Dendritic cell treated with granulocyte-macrophage colony-stimulating factor and Interleukin-4, amounts not matched to agents 40 ng/mL and 50 ng/mL, for 4 days (primary cell): ENCODE measurements at regions of chr4 and their contacts with region 1.

Region 1: GRCh38 chr4:162497564-162498167 is 333.9 kb upstream of the FSTL5 start:
- H3K4me3 Mint-ChIP-seq: no peak overlapping the region
- H3K27ac Mint-ChIP-seq: no peak overlapping the region
- H3K4me1 Mint-ChIP-seq: no peaks in the 10 kb centered on the region
- H3K27me3 Mint-ChIP-seq: peaks cover 1% of the 10 kb centered on the region

Region 2: DNA sequence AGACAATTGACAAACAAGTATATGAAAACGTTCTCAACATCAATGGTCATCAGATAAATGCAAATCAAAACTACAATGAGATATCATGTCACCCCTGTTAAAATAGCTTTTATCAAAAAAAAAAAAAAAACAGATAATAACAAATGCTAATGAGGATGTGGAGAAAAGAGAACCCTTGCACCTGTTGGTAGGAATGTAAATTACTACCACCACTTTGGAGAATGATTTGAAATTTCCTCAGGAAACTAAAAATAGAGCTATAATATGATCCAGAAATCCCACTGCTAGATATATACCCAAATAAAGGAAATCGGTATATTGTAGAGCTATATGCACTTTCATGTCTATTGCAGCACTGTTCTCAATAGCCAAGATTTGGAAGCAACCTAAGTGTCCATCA is 136.7 kb after region 1 on chr4:
- intact Hi-C with region 1: no loop called
- H3K4me3 Mint-ChIP-seq: no peak overlapping the region
- H3K27ac Mint-ChIP-seq: no peak overlapping the region
- H3K4me1 Mint-ChIP-seq: no peaks in the 10 kb centered on the region
- H3K27me3 Mint-ChIP-seq: no peaks in the 10 kb centered on the region

Region 3: GRCh38 chr4:162782778-162783564 is 285.3 kb after region 1 on chr4:
- intact Hi-C with region 1: no loop called
- H3K4me3 Mint-ChIP-seq: no peak overlapping the region
- H3K27ac Mint-ChIP-seq: no peak overlapping the region
- H3K4me1 Mint-ChIP-seq: no peaks in the 10 kb centered on the region
- H3K27me3 Mint-ChIP-seq: no peaks in the 10 kb centered on the region

Region 4: GRCh38 chr4:162847945-162848549 is 350.4 kb after region 1 on chr4:
- intact Hi-C with region 1: no loop called
- H3K4me3 Mint-ChIP-seq: no peak overlapping the region
- H3K27ac Mint-ChIP-seq: no peak overlapping the region
- H3K4me1 Mint-ChIP-seq: no peaks in the 10 kb centered on the region
- H3K27me3 Mint-ChIP-seq: no peaks in the 10 kb centered on the region

Region 5: GRCh38 chr4:163217505-163217904 is 719.8 kb after region 1 on chr4:
- intact Hi-C with region 1: no loop called
- H3K4me3 Mint-ChIP-seq: no peak overlapping the region
- H3K27ac Mint-ChIP-seq: no peak overlapping the region
- H3K4me1 Mint-ChIP-seq: no peaks in the 10 kb centered on the region
- H3K27me3 Mint-ChIP-seq: no peaks in the 10 kb centered on the region

Region 6: GRCh38 chr4:163755013-163755412 is 1257.3 kb after region 1 on chr4:
- intact Hi-C with region 1: loop called (anchors 5 kb)
- H3K4me3 Mint-ChIP-seq: no peak overlapping the region
- H3K27ac Mint-ChIP-seq: no peak overlapping the region
- H3K4me1 Mint-ChIP-seq: no peaks in the 10 kb centered on the region
- H3K27me3 Mint-ChIP-seq: peaks cover 3% of the 10 kb centered on the region